PC-9 (cell line): ENCODE measurements at regions of chr11 and their contacts with region 1.

Region 1: GRCh38 chr11:77223797-77224196 is 77.7 kb downstream of the GDPD4 start:
- DNase-seq: no peak
- H3K4me3 ChIP-seq: no peak overlapping the region
- H3K27ac ChIP-seq: no peak overlapping the region
- H3K4me1 ChIP-seq: no peaks in the 10 kb centered on the region
- H3K27me3 ChIP-seq: peaks cover 48% of the 10 kb centered on the region
- CTCF ChIP-seq: no peak

Region 2: DNA sequence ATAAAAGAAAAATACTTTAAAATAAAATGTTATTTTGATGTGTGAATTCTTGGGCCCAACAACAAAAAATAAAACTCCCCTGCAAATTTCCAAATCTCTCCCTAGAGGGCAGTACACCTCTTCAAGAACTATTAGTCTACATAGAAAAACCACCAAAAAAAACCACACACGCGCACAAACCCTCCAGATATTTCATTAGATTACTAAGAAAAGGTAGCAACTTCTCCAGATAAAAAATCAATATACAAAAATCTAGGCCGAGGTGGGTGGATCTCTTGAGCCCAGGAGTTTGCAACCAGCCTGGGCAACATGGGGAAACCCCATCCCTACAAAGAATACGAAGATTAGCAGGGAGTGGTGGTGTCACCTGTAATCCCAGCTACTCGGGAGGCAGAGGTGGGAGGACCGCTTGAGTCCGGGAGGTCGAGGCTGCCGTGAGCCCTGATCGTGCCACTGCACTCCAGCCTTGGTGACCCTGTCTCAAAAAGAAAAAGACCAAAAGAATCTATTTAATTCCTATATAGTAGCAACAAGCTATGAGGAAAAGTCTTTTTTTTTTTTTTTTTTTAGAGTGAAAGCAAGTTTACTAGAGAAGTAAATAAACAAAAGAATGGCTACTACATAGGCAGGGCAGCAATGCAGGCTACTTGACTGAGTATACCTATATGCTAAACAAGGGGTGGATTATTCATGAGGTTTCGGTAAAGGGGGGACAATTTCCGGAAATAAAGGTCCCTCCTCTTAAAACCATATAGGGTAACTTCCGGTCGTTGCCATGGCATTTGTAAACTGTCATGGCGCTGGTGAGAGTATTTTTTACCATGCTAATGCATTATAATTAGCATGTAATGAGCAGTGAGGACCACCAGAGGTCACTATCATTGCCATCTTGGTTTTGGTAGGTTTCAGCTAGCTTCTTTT is 176.5 kb before region 1 on chr11:
- CTCF ChIA-PET with region 1: no interaction called
- POLR2A ChIA-PET with region 1: no interaction called
- intact Hi-C with region 1: no loop called
- DNase-seq: peak; percentile 81 to 94
- H3K4me3 ChIP-seq: peak overlapping the region; percentile 68
- H3K27ac ChIP-seq: peak overlapping the region; percentile 35; the same call in 1 of the 2 replicates
- H3K4me1 ChIP-seq: peaks cover 10% of the 10 kb centered on the region
- H3K27me3 ChIP-seq: no peaks in the 10 kb centered on the region
- CTCF ChIP-seq: peak; percentile 87

Region 3: DNA sequence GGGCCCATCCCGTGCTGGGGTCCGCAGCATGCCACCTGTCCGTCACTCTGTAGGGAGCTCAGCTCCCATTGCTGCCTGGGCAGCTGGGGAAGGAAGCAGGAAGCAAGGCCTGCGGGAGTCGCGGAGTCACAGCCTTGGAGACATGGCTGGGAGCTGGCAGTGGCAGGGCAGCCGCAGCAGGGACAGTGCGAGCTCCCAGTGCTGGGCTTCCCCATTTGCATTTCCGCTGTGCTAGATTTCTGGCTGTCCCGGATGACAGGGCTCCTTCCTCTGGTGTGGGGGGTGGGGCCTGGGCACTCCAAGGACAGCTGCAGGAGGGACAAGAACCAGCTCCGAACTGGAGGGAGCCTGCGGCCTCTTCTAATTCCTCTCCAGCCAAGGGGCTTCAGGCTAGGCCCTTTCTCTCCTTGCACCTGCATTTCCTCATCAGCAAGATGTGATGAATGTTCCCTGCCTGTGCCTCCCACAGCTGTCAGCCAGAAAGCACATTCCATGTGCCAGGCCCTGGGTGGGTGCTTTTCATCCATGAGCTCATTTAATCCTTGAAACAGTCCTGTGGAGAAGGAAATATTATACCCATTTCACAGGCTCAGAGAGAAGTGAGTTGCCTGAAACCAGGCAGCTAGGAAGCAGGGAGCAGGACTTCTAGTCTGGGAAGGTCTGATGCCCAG is 47.8 kb before region 1 on chr11:
- CTCF ChIA-PET with region 1: no interaction called
- POLR2A ChIA-PET with region 1: no interaction called
- intact Hi-C with region 1: no loop called
- DNase-seq: no peak
- H3K4me3 ChIP-seq: no peak overlapping the region
- H3K27ac ChIP-seq: no peak overlapping the region
- H3K4me1 ChIP-seq: no peaks in the 10 kb centered on the region
- H3K27me3 ChIP-seq: peaks cover 22% of the 10 kb centered on the region
- CTCF ChIP-seq: no peak

Region 4: DNA sequence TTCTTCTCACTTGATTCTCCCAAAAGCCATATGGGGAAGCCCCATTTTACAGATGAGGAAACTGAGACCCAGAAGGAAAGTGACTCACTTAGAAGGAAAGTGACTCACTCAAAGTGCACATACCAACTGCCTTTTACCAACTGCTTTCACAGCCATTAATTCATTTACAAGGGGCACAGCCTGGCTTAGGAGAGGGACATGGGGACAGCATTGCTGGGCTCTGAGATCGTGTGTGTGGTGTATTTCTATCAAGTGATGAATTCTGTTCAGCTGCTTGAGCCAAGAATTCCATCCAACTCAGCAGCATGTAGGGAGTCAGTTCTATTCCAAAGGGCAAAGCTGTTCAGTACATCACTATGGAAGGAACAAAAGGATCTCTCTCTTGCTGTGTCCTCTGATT is 273.6 kb after region 1 on chr11:
- CTCF ChIA-PET with region 1: interaction called, 11 read pairs
- POLR2A ChIA-PET with region 1: no interaction called
- intact Hi-C with region 1: no loop called
- DNase-seq: no peak
- H3K4me3 ChIP-seq: no peak overlapping the region
- H3K27ac ChIP-seq: no peak overlapping the region
- H3K4me1 ChIP-seq: no peaks in the 10 kb centered on the region
- H3K27me3 ChIP-seq: peaks cover 28% of the 10 kb centered on the region
- CTCF ChIP-seq: no peak

Region 5: GRCh38 chr11:77752518-77752917 is 528.7 kb after region 1 on chr11:
- CTCF ChIA-PET with region 1: no interaction called
- POLR2A ChIA-PET with region 1: no interaction called
- intact Hi-C with region 1: no loop called
- DNase-seq: no peak
- H3K4me3 ChIP-seq: no peak overlapping the region
- H3K27ac ChIP-seq: no peak overlapping the region
- H3K4me1 ChIP-seq: peaks cover 5% of the 10 kb centered on the region
- H3K27me3 ChIP-seq: no peaks in the 10 kb centered on the region
- CTCF ChIP-seq: no peak